Naive thymus-derived CD4-positive, alpha-beta T cell (primary cell): ENCODE measurements at regions of chr1 and their contacts with region 1.

Region 1: DNA sequence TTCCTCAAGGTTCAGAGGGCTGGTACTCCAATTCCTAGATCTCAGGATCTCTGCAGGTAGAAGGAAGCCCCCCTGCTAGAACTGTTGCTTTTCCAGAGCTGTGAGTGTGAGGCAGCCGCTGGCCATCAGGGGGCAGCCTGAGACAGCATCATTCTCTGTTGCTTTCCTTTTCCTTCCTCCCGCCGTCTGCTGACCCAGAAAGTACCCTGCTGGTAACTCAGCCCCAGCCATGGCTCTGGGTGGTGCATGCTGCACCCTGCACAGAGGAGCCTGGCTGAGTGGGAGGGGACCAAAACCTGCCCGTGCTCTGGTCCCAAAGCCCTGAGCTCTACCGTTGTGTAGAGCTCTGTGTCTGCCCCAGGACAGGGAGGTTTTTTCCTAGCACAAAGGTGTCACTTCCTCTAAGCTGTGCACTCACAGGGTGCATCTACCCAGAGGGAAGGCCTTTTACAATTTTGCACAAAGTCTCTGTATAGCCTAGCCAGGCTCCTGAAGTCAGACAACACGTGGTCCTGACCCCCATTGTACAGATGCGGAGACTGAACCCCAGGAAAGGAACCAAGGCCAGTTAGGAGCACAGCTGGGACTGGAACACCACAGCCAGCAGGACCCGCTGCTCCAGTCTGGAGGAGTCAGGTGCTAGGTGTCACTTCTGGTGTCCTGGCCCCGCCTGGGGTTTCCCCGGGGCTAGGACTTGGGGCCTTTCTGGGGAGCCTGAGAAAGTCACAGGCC is 5.6 kb upstream of the FAM131C start:
- DNase-seq: peak; percentile 52 to 80 (median 73)
- ATAC-seq: peak; percentile 91
- H3K4me3 ChIP-seq: peak overlapping the region; percentile 40
- H3K4me3 Mint-ChIP-seq: peak overlapping the region; percentile 58 to 86 (median 77)
- H3K27ac ChIP-seq: no peak overlapping the region
- H3K27ac Mint-ChIP-seq: peak overlapping the region in 6 of 9 donors; percentile 10 to 83 (median 40)
- H3K4me1 ChIP-seq: peaks cover 6% of the 10 kb centered on the region in 2 donors
- H3K4me1 Mint-ChIP-seq: peaks cover 6 to 15% (median 10%) of the 10 kb centered on the region in 7 donors
- H3K27me3 ChIP-seq: peaks cover 0 to 4% of the 10 kb centered on the region in 2 donors
- H3K27me3 Mint-ChIP-seq: peaks cover under 1 to 12% (median 5%) of the 10 kb centered on the region in 5 donors

Region 2: GRCh38 chr1:16155532-16156410 is 76.7 kb after region 1 on chr1 and contains the start of gene EPHA2:
- CTCF ChIA-PET with region 1: interaction called, 9 read pairs
- POLR2A ChIA-PET with region 1: interaction called, 3 read pairs
- intact Hi-C with region 1: loop called in 1 of 2 experiments (anchors 2 kb)
- DNase-seq: no peak
- ATAC-seq: peak; percentile 20
- H3K4me3 ChIP-seq: peak within 1 kb of the TSS; percentile 51
- H3K4me3 Mint-ChIP-seq: peak within 1 kb of the TSS; percentile 33 to 86 (median 73)
- H3K27ac ChIP-seq: no peak within 1 kb of the TSS
- H3K27ac Mint-ChIP-seq: peak within 1 kb of the TSS in 6 of 9 donors; percentile 46 to 93 (median 70)
- H3K4me1 ChIP-seq: peaks cover 24 to 38% of the 10 kb centered on the region in 2 donors
- H3K4me1 Mint-ChIP-seq: peaks cover 27 to 80% (median 55%) of the 10 kb centered on the region in 7 donors
- H3K27me3 ChIP-seq: no peaks in the 10 kb centered on the region
- H3K27me3 Mint-ChIP-seq: peaks cover 0 to 61% (median 3%) of the 10 kb centered on the region in 5 donors
- total RNA-seq, gene EPHA2: 0.59 to 0.61 TPM in 2 of 5 experiments, not detected in the others

Region 3: GRCh38 chr1:16243936-16244649 is 165.0 kb after region 1 on chr1:
- CTCF ChIA-PET with region 1: interaction called, 19 read pairs
- POLR2A ChIA-PET with region 1: no interaction called
- intact Hi-C with region 1: loop called (anchors 1 kb)
- DNase-seq: peak; percentile 38 to 77 (median 68)
- ATAC-seq: peak; percentile 94
- H3K4me3 ChIP-seq: no peak overlapping the region
- H3K4me3 Mint-ChIP-seq: no peak overlapping the region
- H3K27ac ChIP-seq: no peak overlapping the region
- H3K27ac Mint-ChIP-seq: peak overlapping the region in 4 of 9 donors; percentile 21 to 92 (median 65)
- H3K4me1 ChIP-seq: peaks cover 0 to 5% of the 10 kb centered on the region in 2 donors
- H3K4me1 Mint-ChIP-seq: peaks cover 9 to 21% (median 17%) of the 10 kb centered on the region in 7 donors
- H3K27me3 ChIP-seq: no peaks in the 10 kb centered on the region
- H3K27me3 Mint-ChIP-seq: no peaks in the 10 kb centered on the region